Gastrocnemius medialis (tissue), 4 donors: ENCODE measurements at regions of chr17 and their contacts with region 1.

Region 1: DNA sequence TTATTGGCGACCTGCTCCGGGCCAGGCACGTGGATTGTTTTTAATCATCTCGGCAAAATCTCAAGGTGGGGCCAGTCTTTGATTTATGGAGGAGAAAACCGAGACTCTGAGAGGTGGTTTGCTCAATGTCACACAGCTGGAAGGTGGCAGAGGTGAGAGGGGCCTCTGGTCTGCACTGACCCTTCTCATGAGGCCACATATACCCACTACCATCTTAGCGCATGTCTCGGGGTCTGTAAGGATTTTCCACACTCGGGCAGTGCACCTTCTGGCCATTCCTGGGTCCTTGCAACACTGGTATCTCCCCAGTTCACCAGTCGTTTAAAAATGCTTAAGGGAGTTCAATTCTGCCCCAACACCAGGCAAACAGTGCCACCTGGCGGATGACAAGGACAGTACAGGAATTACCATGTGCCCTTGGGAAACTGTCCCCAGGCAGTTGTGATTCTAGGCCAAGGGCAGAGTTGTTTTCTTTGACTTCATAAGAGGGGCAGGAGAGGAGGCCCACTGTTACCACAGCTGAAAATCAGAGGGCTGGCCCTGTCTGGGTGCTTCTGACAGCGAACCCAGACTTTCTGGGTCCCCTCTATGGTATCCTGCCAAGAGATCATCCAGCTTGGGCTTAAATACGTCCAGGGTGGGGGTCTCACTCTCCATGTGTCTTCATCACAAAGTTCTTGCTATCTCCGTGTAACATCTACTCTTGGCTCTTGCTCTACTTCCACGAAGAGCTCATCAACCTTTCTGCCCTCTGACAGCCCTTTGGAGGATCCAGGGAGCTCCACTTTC is 39.4 kb upstream of the RAI1 start:
- DNase-seq: peak; percentile 45 to 60
- ATAC-seq: peak; percentile 86 to 89
- H3K4me3 ChIP-seq: no peak overlapping the region
- H3K27ac ChIP-seq: no peak overlapping the region
- H3K4me1 ChIP-seq: no peaks in the 10 kb centered on the region
- H3K27me3 ChIP-seq: no peaks in the 10 kb centered on the region
- CTCF ChIP-seq: peak; percentile 63 to 91 (median 88)
- POLR2A ChIP-seq: no peak

Region 2: GRCh38 chr17:17356149-17356930 is 285.5 kb before region 1 on chr17:
- in situ Hi-C with region 1: loop called (anchors 5 kb)
- intact Hi-C with region 1: loop called (anchors 1 kb)
- DNase-seq: peak; percentile 55 to 77
- ATAC-seq: peak; percentile 79 to 83
- H3K4me3 ChIP-seq: no peak overlapping the region
- H3K27ac ChIP-seq: no peak overlapping the region
- H3K4me1 ChIP-seq: peaks cover 0 to 5% of the 10 kb centered on the region in 2 donors
- H3K27me3 ChIP-seq: no peaks in the 10 kb centered on the region
- CTCF ChIP-seq: peak; percentile 98 to 100 (median 99)
- POLR2A ChIP-seq: no peak

Region 3: GRCh38 chr17:17440010-17440843 is 201.6 kb before region 1 on chr17:
- in situ Hi-C with region 1: no loop called
- intact Hi-C with region 1: no loop called
- DNase-seq: no peak
- ATAC-seq: peak; percentile 46 to 49
- H3K4me3 ChIP-seq: no peak overlapping the region
- H3K27ac ChIP-seq: no peak overlapping the region
- H3K4me1 ChIP-seq: no peaks in the 10 kb centered on the region
- H3K27me3 ChIP-seq: peaks cover 0 to 10% (median 3%) of the 10 kb centered on the region in 3 donors
- CTCF ChIP-seq: peak in 3 of 5 experiments; percentile 42 to 43 (median 42)
- POLR2A ChIP-seq: no peak

Region 4: DNA sequence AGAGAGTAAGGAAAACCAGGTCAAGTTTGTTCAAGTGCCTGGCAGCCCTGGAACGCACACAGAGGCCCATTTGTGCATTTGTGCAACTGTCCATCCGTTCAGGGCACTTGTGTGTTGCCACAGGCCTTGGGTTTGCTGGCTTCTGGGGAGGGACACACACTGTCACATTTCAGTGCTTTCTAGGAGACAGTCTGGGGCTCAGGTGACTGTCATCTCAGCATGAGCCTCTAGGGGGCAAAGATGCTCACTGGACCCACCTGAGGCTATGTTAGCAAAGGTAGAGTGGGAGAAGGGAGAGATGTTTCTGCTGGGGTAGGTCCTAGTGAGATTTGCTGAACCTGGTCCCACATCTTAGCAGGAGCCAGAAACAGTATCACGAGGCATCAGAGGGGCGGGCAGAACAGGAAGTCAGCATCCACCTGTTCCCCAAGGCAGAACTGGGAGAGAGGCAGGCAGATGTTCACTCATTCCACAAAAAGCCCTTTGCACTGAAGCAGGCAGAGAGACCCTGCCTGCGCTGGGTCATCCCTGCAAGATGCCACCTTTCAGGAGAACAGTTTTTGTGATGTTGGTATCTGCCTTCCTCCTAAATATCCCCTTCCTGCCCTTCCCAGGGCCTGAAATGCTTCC is 87.9 kb after region 1 on chr17:
- in situ Hi-C with region 1: no loop called
- intact Hi-C with region 1: no loop called
- DNase-seq: no peak
- ATAC-seq: peak in 1 of 2 donors; percentile 51
- H3K4me3 ChIP-seq: no peak overlapping the region
- H3K27ac ChIP-seq: no peak overlapping the region
- H3K4me1 ChIP-seq: peaks cover 0 to 8% of the 10 kb centered on the region in 2 donors
- H3K27me3 ChIP-seq: no peaks in the 10 kb centered on the region
- CTCF ChIP-seq: peak; percentile 15 to 63 (median 56)
- POLR2A ChIP-seq: no peak